A549 (cell line): ENCODE measurements at regions of chr2 and their contacts with region 1.

Region 1: DNA sequence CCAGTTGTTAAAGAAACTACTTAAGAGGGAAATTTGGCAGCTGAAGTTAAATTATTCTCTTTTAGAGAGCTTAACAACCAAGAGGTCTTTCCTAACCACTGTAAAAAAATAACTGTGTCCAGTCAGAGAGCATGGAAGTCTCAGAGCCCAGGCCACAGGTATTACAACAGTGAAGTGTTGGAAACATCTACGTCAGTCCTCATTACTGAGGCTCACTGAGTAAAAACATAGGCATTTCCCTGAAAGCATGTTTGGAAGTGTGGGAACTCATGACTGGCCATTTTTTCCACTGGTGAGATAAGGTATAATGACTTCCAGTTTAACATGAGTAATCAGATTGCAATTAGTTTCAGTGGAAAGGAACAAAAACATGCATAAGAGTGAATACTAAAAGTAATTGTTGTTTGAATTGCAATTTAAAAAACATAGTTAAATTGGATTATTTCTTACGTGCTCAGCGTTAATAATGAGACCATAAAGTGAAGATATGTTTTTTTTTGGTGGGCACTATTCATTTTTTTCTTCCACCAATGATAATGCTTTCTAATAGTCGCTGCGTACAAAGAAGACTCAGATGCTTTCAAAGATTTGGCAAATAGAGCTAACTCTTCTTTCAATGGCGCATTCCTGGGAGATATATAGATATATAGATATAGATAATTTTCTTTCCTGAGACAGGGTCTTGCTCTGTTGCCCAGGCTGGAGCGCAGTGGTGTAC is 60.8 kb downstream of the EFEMP1 start:
- DNase-seq: peak; percentile 53 to 94
- ATAC-seq: peak; percentile 94 to 99
- H3K4me3 ChIP-seq: no peak overlapping the region
- H3K27ac ChIP-seq: peak overlapping the region; percentile 89 to 90
- H3K4me1 ChIP-seq: peaks cover 38% of the 10 kb centered on the region
- CTCF ChIP-seq: no peak
- EP300 ChIP-seq: peak; percentile 51 to 87; a peak in 3 of 5 replicates
- POLR2A ChIP-seq: no peak
- RAD21 ChIP-seq: peak; percentile 6 to 57; a peak in 1 of 5 replicates

Region 2: GRCh38 chr2:55268907-55269644 is 593.8 kb before region 1 on chr2 and contains the start of gene MTIF2:
- CTCF ChIA-PET with region 1: no interaction called
- POLR2A ChIA-PET with region 1: no interaction called
- DNase-seq: peak; percentile 95 to 97
- ATAC-seq: peak; percentile 99 to 100
- H3K4me3 ChIP-seq: peak within 1 kb of the TSS; percentile 82
- H3K27ac ChIP-seq: peak within 1 kb of the TSS; percentile 85 to 88
- H3K4me1 ChIP-seq: peaks cover 10% of the 10 kb centered on the region; the same call in 2 of the 3 replicates
- CTCF ChIP-seq: no peak
- EP300 ChIP-seq: no peak
- POLR2A ChIP-seq: peak; percentile 95
- RAD21 ChIP-seq: 0 out of 5 replicates have a peak, but pooled peaks of 1 of the 2 experiments have one; percentile 9
- polyA plus RNA-seq, gene MTIF2: 55.3 and 91.6 TPM in 2 replicates

Region 3: DNA sequence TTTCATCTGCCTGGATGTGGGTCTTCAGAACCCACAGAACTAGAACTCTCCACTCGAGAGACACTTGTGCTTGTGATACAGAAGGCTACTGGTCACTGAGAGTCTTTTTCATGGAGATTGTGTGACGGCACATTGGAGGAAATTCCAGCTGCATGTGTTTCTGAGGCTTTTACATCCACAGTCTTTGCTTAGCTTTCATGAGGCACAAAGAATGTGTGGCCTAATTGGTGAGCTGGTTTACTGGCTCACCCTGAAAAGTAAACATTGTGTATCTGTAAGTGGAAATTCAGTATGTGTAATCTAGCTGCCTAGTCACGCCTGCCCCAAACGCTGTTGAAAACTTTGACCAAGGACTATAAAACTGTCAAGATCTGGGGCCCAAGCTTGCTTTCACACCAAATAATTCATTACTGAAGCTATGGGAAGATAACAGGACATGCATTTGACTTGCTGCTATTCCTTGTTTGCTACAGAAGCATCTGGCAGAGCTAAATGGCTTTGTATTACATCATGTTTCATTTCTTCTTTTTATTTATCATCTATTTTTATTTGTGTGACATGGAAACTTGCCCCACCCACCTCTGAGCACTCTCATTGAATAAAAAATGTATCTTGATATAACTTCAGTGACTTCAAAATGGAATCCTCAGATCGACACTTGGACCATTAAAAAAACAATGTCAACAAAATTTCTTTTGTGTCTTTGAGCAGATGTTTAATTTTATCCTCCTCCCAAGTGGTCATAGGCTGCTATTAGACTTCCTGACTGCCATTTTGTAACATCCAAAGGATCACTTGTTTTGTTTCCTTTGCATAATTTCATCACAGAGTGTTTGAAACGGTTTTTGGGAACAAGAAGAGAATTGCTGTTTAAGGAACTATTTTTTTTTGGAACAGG is 19.5 kb before region 1 on chr2:
- CTCF ChIA-PET with region 1: interaction called, 8 read pairs
- POLR2A ChIA-PET with region 1: interaction called, 15 read pairs
- DNase-seq: peak; percentile 18 to 95
- ATAC-seq: peak; percentile 76 to 77
- H3K4me3 ChIP-seq: peak overlapping the region; percentile 7; the same call in 1 of the 3 replicates
- H3K27ac ChIP-seq: peak overlapping the region; percentile 76 to 85
- H3K4me1 ChIP-seq: peaks cover 73% of the 10 kb centered on the region
- CTCF ChIP-seq: no peak
- EP300 ChIP-seq: peak; percentile 76 to 87; a peak in 3 of 5 replicates
- POLR2A ChIP-seq: no peak
- RAD21 ChIP-seq: peak in 1 of 2 experiments; percentile 40; a peak in 3 of 5 replicates